Mammary epithelial cell (primary cell): ENCODE measurements at regions of chr17 and their contacts with region 1.

Region 1: GRCh38 chr17:10618202-10618635 is 38.9 kb downstream of the MYH3 start:
- DNase-seq: peak; percentile 68
- H3K4me3 ChIP-seq: no peak overlapping the region
- H3K27ac ChIP-seq: no peak overlapping the region
- H3K4me1 ChIP-seq: peaks cover 28% of the 10 kb centered on the region
- H3K27me3 ChIP-seq: no peaks in the 10 kb centered on the region
- CTCF ChIP-seq: peak; percentile 90 to 97

Region 2: GRCh38 chr17:9644910-9645751 is 973.1 kb before region 1 on chr17 and contains the start of gene USP43:
- CTCF ChIA-PET with region 1: interaction called, 10 read pairs
- dilution Hi-C with region 1: no loop called
- in situ Hi-C with region 1: no loop called
- intact Hi-C with region 1: no loop called
- DNase-seq: peak; percentile 81
- H3K4me3 ChIP-seq: peak within 1 kb of the TSS; percentile 63 to 79 (median 69)
- H3K27ac ChIP-seq: peak within 1 kb of the TSS; percentile 88
- H3K4me1 ChIP-seq: peaks cover 25% of the 10 kb centered on the region
- H3K27me3 ChIP-seq: no peaks in the 10 kb centered on the region
- CTCF ChIP-seq: peak in 1 of 2 donors; percentile 13
- total RNA-seq, gene USP43: 8.0 to 9.3 TPM

Region 3: DNA sequence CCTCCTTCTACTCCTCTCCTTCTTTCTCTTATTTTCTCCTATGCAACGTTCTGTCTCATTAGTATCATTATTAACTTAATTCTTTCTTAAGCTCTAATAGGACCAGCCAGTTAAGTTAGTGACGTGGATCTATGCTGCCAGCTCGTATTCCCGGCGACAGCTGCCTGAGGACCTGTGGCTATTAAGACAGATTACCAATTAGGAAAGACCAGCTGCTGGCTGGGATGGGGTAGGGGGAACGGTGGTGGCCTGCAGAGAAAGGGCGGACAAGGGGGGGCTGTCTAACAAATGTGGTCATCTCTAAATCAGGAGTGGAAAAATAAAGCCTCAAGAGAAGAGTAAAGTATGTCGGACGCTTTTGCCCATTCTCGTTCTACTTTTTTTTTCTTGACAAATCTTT is 39.7 kb after region 1 on chr17:
- CTCF ChIA-PET with region 1: no interaction called
- dilution Hi-C with region 1: no loop called
- in situ Hi-C with region 1: no loop called
- intact Hi-C with region 1: no loop called
- DNase-seq: no peak
- H3K4me3 ChIP-seq: no peak overlapping the region
- H3K27ac ChIP-seq: no peak overlapping the region
- H3K4me1 ChIP-seq: no peaks in the 10 kb centered on the region
- H3K27me3 ChIP-seq: no peaks in the 10 kb centered on the region
- CTCF ChIP-seq: no peak

Region 4: GRCh38 chr17:10668771-10669170 is 50.6 kb after region 1 on chr17:
- CTCF ChIA-PET with region 1: no interaction called
- dilution Hi-C with region 1: no loop called
- in situ Hi-C with region 1: no loop called
- intact Hi-C with region 1: no loop called
- DNase-seq: no peak
- H3K4me3 ChIP-seq: no peak overlapping the region
- H3K27ac ChIP-seq: no peak overlapping the region
- H3K4me1 ChIP-seq: no peaks in the 10 kb centered on the region
- H3K27me3 ChIP-seq: no peaks in the 10 kb centered on the region
- CTCF ChIP-seq: no peak

Region 5: DNA sequence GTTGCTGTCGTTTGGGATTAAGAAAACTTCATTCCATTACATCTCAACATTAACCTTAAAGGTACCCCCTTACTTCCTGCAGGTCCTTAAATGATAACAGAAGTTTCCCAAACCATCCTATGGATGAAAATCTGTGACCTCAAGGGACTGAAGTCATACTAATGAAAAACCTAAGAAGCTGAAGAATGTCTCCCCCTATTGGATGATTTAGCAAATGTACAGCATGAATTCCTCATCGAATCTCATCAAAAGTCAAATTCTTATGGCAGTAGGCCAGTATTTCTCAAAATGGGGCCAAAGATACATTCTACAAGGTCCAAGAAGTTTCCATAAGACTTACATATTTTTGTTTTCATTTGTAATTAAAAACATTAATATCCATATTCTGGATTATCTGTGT is 65.6 kb after region 1 on chr17:
- CTCF ChIA-PET with region 1: no interaction called
- dilution Hi-C with region 1: no loop called
- in situ Hi-C with region 1: no loop called
- intact Hi-C with region 1: loop called (anchors 2 kb)
- DNase-seq: peak; percentile 11
- H3K4me3 ChIP-seq: no peak overlapping the region
- H3K27ac ChIP-seq: no peak overlapping the region
- H3K4me1 ChIP-seq: no peaks in the 10 kb centered on the region
- H3K27me3 ChIP-seq: no peaks in the 10 kb centered on the region
- CTCF ChIP-seq: peak; percentile 50 to 57

Region 6: DNA sequence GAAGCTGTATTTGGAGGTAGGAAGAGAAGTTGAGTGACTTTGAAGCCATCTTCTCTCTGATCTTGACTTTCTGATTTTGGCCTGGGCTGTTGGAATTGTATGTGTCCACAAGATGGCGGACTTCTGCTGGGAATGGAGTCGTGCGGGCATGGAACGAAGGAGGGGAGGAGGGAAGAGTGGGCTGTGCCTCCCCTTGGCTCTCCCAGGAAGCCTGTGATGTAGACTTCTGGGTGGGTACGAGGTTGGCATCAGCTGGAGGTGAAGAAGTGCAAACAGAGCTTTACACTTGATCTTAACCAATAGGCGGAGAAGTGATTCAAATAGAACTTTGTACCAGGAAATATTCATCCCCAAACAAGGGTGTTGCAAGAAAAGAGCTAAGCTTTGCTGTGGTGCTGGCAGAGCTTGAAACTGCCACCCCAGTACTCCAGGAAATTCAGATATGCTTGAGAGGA is 119.0 kb after region 1 on chr17:
- CTCF ChIA-PET with region 1: no interaction called
- dilution Hi-C with region 1: no loop called
- in situ Hi-C with region 1: no loop called
- intact Hi-C with region 1: loop called (anchors 2 kb)
- DNase-seq: peak; percentile 21
- H3K4me3 ChIP-seq: no peak overlapping the region
- H3K27ac ChIP-seq: no peak overlapping the region
- H3K4me1 ChIP-seq: no peaks in the 10 kb centered on the region
- H3K27me3 ChIP-seq: no peaks in the 10 kb centered on the region
- CTCF ChIP-seq: peak; percentile 67 to 86

Region 7: GRCh38 chr17:11935734-11936406 is 1317.7 kb after region 1 on chr17:
- CTCF ChIA-PET with region 1: interaction called, 3 read pairs
- dilution Hi-C with region 1: no loop called
- in situ Hi-C with region 1: no loop called
- intact Hi-C with region 1: loop called (anchors 5 kb)
- DNase-seq: peak; percentile 51
- H3K4me3 ChIP-seq: no peak overlapping the region
- H3K27ac ChIP-seq: no peak overlapping the region
- H3K4me1 ChIP-seq: no peaks in the 10 kb centered on the region
- H3K27me3 ChIP-seq: no peaks in the 10 kb centered on the region
- CTCF ChIP-seq: peak; percentile 99